Naive thymus-derived CD4-positive, alpha-beta T cell (primary cell): ENCODE measurements at regions of chr7 and their contacts with region 1.

Region 1: GRCh38 chr7:77696198-77697028 is at the start of gene RSBN1L:
- DNase-seq: peak; percentile 96 to 98 (median 98)
- ATAC-seq: peak; percentile 98
- H3K4me3 ChIP-seq: peak within 1 kb of the TSS; percentile 99
- H3K4me3 Mint-ChIP-seq: peak within 1 kb of the TSS; percentile 89 to 100 (median 99)
- H3K27ac ChIP-seq: peak within 1 kb of the TSS; percentile 94
- H3K27ac Mint-ChIP-seq: peak within 1 kb of the TSS; percentile 94 to 98 (median 96)
- H3K4me1 ChIP-seq: peaks cover 13 to 15% of the 10 kb centered on the region in 2 donors
- H3K4me1 Mint-ChIP-seq: peaks cover 22 to 81% (median 65%) of the 10 kb centered on the region in 7 donors
- H3K27me3 ChIP-seq: no peaks in the 10 kb centered on the region
- H3K27me3 Mint-ChIP-seq: no peaks in the 10 kb centered on the region
- total RNA-seq, gene RSBN1L: 19.7 to 41.7 (median 30.8) TPM

Region 2: GRCh38 chr7:77281780-77282478 is 414.5 kb before region 1 on chr7:
- CTCF ChIA-PET with region 1: no interaction called
- POLR2A ChIA-PET with region 1: no interaction called
- intact Hi-C with region 1: no loop called
- DNase-seq: no peak
- ATAC-seq: no peak
- H3K4me3 ChIP-seq: no peak overlapping the region
- H3K4me3 Mint-ChIP-seq: no peak overlapping the region
- H3K27ac ChIP-seq: no peak overlapping the region
- H3K27ac Mint-ChIP-seq: no peak overlapping the region
- H3K4me1 ChIP-seq: no peaks in the 10 kb centered on the region
- H3K4me1 Mint-ChIP-seq: peaks cover 0 to 1% (median 0%) of the 10 kb centered on the region in 7 donors
- H3K27me3 ChIP-seq: no peaks in the 10 kb centered on the region
- H3K27me3 Mint-ChIP-seq: no peaks in the 10 kb centered on the region

Region 3: DNA sequence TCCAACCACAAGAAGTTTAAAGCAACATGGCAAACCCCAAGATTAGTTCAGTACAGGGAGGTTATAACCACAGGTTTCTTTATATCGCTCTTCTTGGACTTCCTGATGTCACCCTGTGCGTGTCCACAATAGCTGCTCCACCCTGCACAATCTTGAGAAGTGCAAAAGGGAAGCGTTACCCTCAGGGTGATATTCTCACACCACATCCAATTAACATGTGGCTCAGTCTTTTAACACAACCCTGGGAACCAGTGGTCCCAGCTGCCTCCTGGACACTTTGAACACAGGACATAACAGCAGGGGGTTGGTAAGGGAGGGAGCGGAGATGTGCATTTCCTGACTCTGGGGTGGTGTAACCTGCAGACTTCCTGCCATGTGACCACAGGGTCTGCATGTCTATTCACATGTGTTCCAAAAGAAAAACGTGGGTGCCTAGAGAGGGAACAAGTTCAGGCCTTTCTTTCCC is 344.8 kb before region 1 on chr7:
- CTCF ChIA-PET with region 1: no interaction called
- POLR2A ChIA-PET with region 1: interaction called, 6 read pairs
- intact Hi-C with region 1: loop called in 1 of 2 experiments (anchors 5 kb)
- DNase-seq: peak; percentile 14 to 69 (median 57)
- ATAC-seq: peak; percentile 90
- H3K4me3 ChIP-seq: peak overlapping the region; percentile 6
- H3K4me3 Mint-ChIP-seq: peak overlapping the region; percentile 70 to 96 (median 85)
- H3K27ac ChIP-seq: peak overlapping the region; percentile 42
- H3K27ac Mint-ChIP-seq: peak overlapping the region; percentile 84 to 96 (median 90)
- H3K4me1 ChIP-seq: peaks cover 55 to 59% of the 10 kb centered on the region in 2 donors
- H3K4me1 Mint-ChIP-seq: peaks cover 47 to 82% (median 79%) of the 10 kb centered on the region in 7 donors
- H3K27me3 ChIP-seq: no peaks in the 10 kb centered on the region
- H3K27me3 Mint-ChIP-seq: peaks cover 0 to 11% (median 0%) of the 10 kb centered on the region in 5 donors

Region 4: GRCh38 chr7:77657427-77658224 is 38.8 kb before region 1 on chr7:
- CTCF ChIA-PET with region 1: interaction called, 6 read pairs
- POLR2A ChIA-PET with region 1: no interaction called
- intact Hi-C with region 1: loop called (anchors 1 to 2 kb)
- DNase-seq: peak in 7 of 9 donors; percentile 16 to 54 (median 44)
- ATAC-seq: peak; percentile 69
- H3K4me3 ChIP-seq: no peak overlapping the region
- H3K4me3 Mint-ChIP-seq: no peak overlapping the region
- H3K27ac ChIP-seq: no peak overlapping the region
- H3K27ac Mint-ChIP-seq: no peak overlapping the region
- H3K4me1 ChIP-seq: no peaks in the 10 kb centered on the region
- H3K4me1 Mint-ChIP-seq: no peaks in the 10 kb centered on the region
- H3K27me3 ChIP-seq: no peaks in the 10 kb centered on the region
- H3K27me3 Mint-ChIP-seq: no peaks in the 10 kb centered on the region

Region 5: GRCh38 chr7:77734659-77735421 is 38.4 kb after region 1 on chr7:
- CTCF ChIA-PET with region 1: interaction called, 3 read pairs
- POLR2A ChIA-PET with region 1: interaction called, 3 read pairs
- intact Hi-C with region 1: loop called in 1 of 2 experiments (anchors 5 kb)
- DNase-seq: no peak
- ATAC-seq: no peak
- H3K4me3 ChIP-seq: no peak overlapping the region
- H3K4me3 Mint-ChIP-seq: no peak overlapping the region
- H3K27ac ChIP-seq: no peak overlapping the region
- H3K27ac Mint-ChIP-seq: peak overlapping the region in 2 of 9 donors; percentile 39 to 70
- H3K4me1 ChIP-seq: peaks cover 0 to 5% of the 10 kb centered on the region in 2 donors
- H3K4me1 Mint-ChIP-seq: peaks cover 10 to 58% (median 42%) of the 10 kb centered on the region in 7 donors
- H3K27me3 ChIP-seq: no peaks in the 10 kb centered on the region
- H3K27me3 Mint-ChIP-seq: no peaks in the 10 kb centered on the region

Region 6: DNA sequence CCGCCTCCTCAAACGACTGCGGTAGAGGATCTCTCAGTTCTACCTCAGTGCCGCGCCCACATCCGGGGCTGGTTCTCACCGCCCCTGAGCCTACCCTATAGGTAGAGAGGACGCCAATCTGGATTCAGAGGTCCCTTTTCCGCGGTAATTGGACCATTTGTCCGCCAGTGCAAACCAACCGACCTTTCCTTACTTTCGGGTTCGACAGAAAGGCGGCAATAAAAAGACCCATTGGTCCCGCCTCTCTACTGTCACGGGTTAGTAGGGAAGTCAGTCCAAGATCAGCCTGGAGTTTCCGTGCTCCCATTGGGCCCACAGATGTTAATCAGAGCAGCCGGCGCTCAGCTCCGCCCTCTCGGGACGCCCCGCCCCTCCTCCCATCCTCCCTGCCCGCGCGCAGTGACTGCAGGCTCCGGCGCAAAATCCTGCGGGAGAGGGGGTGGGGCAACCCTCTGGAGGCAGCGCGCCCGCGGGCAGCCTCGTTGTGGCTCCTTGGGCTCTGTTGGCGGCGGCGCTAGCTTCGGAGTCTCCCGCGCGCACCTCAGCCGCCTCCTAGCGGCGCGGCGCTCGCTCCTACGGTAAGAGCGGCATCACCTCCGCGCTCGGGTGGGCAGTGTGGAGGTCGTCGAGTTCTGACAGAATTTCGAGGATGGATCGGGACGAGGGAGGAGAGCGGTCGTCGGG is 102.1 kb after region 1 on chr7 and contains the starts of genes PHTF2 and TMEM60:
- CTCF ChIA-PET with region 1: no interaction called
- POLR2A ChIA-PET with region 1: interaction called, 3 read pairs
- intact Hi-C with region 1: loop called (anchors 1 kb)
- DNase-seq: peak; percentile 78 to 97 (median 95)
- ATAC-seq: peak; percentile 94
- H3K4me3 ChIP-seq: peak within 1 kb of the TSS; percentile 85
- H3K4me3 Mint-ChIP-seq: peak within 1 kb of the TSS; percentile 87 to 99 (median 96)
- H3K27ac ChIP-seq: peak within 1 kb of the TSS; percentile 73
- H3K27ac Mint-ChIP-seq: peak within 1 kb of the TSS; percentile 89 to 96 (median 94)
- H3K4me1 ChIP-seq: peaks cover 45 to 52% of the 10 kb centered on the region in 2 donors
- H3K4me1 Mint-ChIP-seq: peaks cover 53 to 83% (median 79%) of the 10 kb centered on the region in 7 donors
- H3K27me3 ChIP-seq: no peaks in the 10 kb centered on the region
- H3K27me3 Mint-ChIP-seq: no peaks in the 10 kb centered on the region
- total RNA-seq, gene PHTF2: 17.6 to 42.1 (median 22.4) TPM
- total RNA-seq, gene TMEM60: 3.7 to 16.9 (median 12.0) TPM

Region 7: GRCh38 chr7:78620920-78621319 is 924.5 kb after region 1 on chr7:
- CTCF ChIA-PET with region 1: no interaction called
- POLR2A ChIA-PET with region 1: no interaction called
- intact Hi-C with region 1: no loop called
- DNase-seq: no peak
- ATAC-seq: no peak
- H3K4me3 ChIP-seq: no peak overlapping the region
- H3K4me3 Mint-ChIP-seq: no peak overlapping the region
- H3K27ac ChIP-seq: no peak overlapping the region
- H3K27ac Mint-ChIP-seq: no peak overlapping the region
- H3K4me1 ChIP-seq: no peaks in the 10 kb centered on the region
- H3K4me1 Mint-ChIP-seq: no peaks in the 10 kb centered on the region
- H3K27me3 ChIP-seq: no peaks in the 10 kb centered on the region
- H3K27me3 Mint-ChIP-seq: no peaks in the 10 kb centered on the region